PC-9 (cell line): ENCODE measurements at regions of chr4 and their contacts with region 1.

Region 1: GRCh38 chr4:101953949-101954348 is 163.4 kb downstream of the BANK1 start:
- DNase-seq: peak in 1 of 2 experiments; percentile 41
- H3K4me3 ChIP-seq: no peak overlapping the region
- H3K27ac ChIP-seq: no peak overlapping the region
- H3K4me1 ChIP-seq: no peaks in the 10 kb centered on the region
- H3K27me3 ChIP-seq: no peaks in the 10 kb centered on the region
- CTCF ChIP-seq: no peak

Region 2: DNA sequence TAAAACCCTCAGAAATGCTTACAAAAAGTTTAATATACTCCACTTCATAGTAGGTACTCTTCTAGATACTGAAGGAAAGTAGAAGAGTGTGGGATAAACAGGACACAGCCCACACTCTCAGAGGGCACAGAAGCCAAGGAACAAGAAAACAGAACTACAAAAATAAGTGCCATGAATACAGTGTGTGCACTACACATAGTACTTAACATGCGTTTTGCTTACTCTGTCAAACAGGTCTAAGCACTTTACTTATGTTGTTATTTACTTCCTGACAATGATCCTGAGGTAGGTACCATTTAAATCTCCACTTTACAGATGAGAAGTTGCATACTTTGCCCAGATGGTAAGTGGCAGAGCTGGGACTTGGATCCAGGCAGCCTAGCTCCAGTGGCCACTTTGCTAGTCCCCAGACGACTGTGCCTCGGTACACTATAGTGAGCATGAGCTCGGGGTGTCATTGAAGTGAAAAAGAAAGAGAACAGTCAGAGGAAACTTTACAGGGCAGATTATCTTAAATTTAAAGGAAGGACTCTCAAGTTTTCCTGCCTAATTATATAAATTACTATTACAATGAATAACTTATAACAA is 43.1 kb before region 1 on chr4:
- CTCF ChIA-PET with region 1: no interaction called
- POLR2A ChIA-PET with region 1: no interaction called
- intact Hi-C with region 1: no loop called
- DNase-seq: no peak
- H3K4me3 ChIP-seq: no peak overlapping the region
- H3K27ac ChIP-seq: no peak overlapping the region
- H3K4me1 ChIP-seq: no peaks in the 10 kb centered on the region
- H3K27me3 ChIP-seq: no peaks in the 10 kb centered on the region
- CTCF ChIP-seq: no peak

Region 3: DNA sequence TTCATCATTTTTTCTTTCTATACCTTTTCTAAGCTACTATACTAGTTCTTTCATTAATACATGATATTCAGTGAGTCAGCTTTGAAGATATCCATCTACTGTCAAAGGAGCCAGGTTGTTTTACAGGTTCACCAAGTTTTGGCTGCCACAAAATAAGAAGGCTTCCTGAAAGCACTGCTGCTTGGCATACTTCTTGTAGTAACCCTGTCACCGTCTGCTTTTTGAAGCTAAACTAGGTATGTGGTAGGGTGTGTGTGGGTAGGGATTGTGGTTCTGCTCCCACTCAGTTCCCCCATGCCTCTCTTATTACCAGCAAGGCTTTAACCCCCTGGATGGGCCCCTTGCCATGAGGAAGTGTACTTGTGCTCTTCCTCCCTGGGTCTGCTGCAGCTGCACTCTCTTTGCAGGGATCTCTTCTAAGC is 27.8 kb after region 1 on chr4:
- CTCF ChIA-PET with region 1: no interaction called
- POLR2A ChIA-PET with region 1: no interaction called
- intact Hi-C with region 1: loop called (anchors 1 kb)
- DNase-seq: peak; percentile 71 to 93
- H3K4me3 ChIP-seq: no peak overlapping the region
- H3K27ac ChIP-seq: peak overlapping the region; percentile 47
- H3K4me1 ChIP-seq: peaks cover 30% of the 10 kb centered on the region
- H3K27me3 ChIP-seq: no peaks in the 10 kb centered on the region
- CTCF ChIP-seq: no peak

Region 4: GRCh38 chr4:102174800-102175199 is 220.9 kb after region 1 on chr4:
- CTCF ChIA-PET with region 1: interaction called, 12 read pairs
- POLR2A ChIA-PET with region 1: no interaction called
- intact Hi-C with region 1: no loop called
- DNase-seq: no peak
- H3K4me3 ChIP-seq: no peak overlapping the region
- H3K27ac ChIP-seq: no peak overlapping the region
- H3K4me1 ChIP-seq: no peaks in the 10 kb centered on the region
- H3K27me3 ChIP-seq: no peaks in the 10 kb centered on the region
- CTCF ChIP-seq: no peak

Region 5: DNA sequence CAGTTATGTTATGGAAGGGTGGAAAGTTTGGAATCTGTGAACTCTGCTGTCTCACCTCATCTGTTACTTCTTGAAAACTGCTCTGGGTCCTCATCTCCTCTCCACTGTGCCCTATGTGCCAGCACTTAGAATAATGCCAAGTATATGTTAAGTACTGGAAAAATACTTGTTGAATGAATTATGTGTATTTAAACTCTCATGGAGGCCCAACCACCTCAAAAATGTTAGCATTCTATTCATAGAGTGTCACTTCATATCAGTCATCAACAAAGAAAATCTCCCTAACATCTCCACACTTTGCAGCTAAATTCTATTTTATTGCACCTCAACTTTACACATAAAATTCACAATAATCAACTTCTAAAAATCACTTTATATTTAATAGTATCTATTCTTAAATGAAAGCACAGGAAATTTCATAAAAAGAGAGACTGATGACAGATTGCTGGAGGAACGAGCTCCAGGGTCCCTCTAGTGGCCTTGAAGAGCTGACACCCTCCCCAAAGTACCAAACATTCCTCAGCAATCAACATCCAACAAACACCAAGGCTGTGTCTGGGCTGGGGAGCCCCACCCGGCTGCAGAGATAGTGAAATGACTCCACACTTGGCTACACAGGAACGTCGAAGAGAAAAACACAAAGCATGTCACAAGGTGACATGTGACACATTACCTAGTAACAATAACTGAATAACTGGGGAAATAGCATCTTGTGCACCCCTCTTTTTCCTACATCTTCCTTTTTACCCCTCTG is 345.6 kb after region 1 on chr4:
- CTCF ChIA-PET with region 1: interaction called, 13 read pairs
- POLR2A ChIA-PET with region 1: no interaction called
- intact Hi-C with region 1: no loop called
- DNase-seq: peak in 1 of 2 experiments; percentile 14
- H3K4me3 ChIP-seq: no peak overlapping the region
- H3K27ac ChIP-seq: no peak overlapping the region
- H3K4me1 ChIP-seq: no peaks in the 10 kb centered on the region
- H3K27me3 ChIP-seq: no peaks in the 10 kb centered on the region
- CTCF ChIP-seq: peak; percentile 75